B cell (primary cell): ENCODE measurements at regions of chr20 and their contacts with region 1.

Region 1: GRCh38 chr20:38221119-38221589 is 39.4 kb downstream of the KIAA1755 start:
- DNase-seq: peak; percentile 77
- ATAC-seq: peak; percentile 84
- H3K4me3 ChIP-seq: no peak overlapping the region
- H3K4me3 Mint-ChIP-seq: peak overlapping the region; percentile 55
- H3K27ac ChIP-seq: no peak overlapping the region
- H3K27ac Mint-ChIP-seq: peak overlapping the region; percentile 37
- H3K4me1 ChIP-seq: peaks cover 0 to 4% of the 10 kb centered on the region in 2 donors
- H3K4me1 Mint-ChIP-seq: peaks cover 5% of the 10 kb centered on the region
- H3K27me3 ChIP-seq: no peaks in the 10 kb centered on the region
- H3K27me3 Mint-ChIP-seq: peaks cover 5% of the 10 kb centered on the region
- CTCF ChIP-seq: peak; percentile 89

Region 2: DNA sequence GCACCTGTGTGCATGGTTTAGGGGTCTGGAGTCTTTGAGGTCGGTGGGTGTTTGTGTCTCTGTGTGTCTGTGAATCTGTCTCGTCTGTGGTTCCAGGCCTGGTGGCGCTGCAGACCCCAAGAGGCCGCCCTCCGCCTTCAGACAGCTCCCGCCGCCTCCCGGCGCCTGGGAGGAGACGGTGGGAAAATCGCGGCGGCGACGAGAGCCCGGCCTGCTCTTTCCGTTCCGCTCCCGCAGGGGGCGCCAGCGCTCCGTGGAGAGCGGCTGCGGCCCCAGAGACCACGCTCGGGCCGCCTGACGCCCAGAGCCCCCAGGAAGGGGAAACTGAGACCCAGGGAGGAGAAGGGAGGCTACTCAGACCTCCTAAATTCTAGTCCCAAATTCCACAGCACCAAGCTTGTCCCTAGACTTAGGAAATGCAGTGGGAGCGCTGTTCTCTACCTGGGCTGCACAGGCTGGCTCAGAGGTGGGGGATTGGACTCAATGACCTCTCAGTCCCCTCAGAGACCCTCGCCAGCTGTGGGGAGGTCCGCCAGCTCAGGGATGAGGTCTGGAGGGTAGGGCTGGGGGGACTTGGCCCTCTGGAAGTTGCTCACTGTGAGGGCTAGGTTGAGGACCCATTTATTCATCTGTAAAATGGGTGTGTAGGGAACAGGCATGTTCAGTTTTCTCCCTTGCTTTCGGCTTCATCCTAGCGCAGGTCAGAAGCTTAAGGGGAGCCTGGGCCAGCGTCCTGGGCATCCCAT is 656.6 kb before region 1 on chr20:
- CTCF ChIA-PET with region 1: interaction called, 24 read pairs
- POLR2A ChIA-PET with region 1: no interaction called
- intact Hi-C with region 1: no loop called
- DNase-seq: peak; percentile 67
- ATAC-seq: peak; percentile 49
- H3K4me3 ChIP-seq: no peak overlapping the region
- H3K4me3 Mint-ChIP-seq: no peak overlapping the region
- H3K27ac ChIP-seq: no peak overlapping the region
- H3K27ac Mint-ChIP-seq: no peak overlapping the region
- H3K4me1 ChIP-seq: peaks cover 3 to 5% of the 10 kb centered on the region in 2 donors
- H3K4me1 Mint-ChIP-seq: peaks cover 2% of the 10 kb centered on the region
- H3K27me3 ChIP-seq: peaks cover 0 to 31% (median 13%) of the 10 kb centered on the region in 4 experiments
- H3K27me3 Mint-ChIP-seq: peaks cover 43% of the 10 kb centered on the region
- CTCF ChIP-seq: peak; percentile 96

Region 3: DNA sequence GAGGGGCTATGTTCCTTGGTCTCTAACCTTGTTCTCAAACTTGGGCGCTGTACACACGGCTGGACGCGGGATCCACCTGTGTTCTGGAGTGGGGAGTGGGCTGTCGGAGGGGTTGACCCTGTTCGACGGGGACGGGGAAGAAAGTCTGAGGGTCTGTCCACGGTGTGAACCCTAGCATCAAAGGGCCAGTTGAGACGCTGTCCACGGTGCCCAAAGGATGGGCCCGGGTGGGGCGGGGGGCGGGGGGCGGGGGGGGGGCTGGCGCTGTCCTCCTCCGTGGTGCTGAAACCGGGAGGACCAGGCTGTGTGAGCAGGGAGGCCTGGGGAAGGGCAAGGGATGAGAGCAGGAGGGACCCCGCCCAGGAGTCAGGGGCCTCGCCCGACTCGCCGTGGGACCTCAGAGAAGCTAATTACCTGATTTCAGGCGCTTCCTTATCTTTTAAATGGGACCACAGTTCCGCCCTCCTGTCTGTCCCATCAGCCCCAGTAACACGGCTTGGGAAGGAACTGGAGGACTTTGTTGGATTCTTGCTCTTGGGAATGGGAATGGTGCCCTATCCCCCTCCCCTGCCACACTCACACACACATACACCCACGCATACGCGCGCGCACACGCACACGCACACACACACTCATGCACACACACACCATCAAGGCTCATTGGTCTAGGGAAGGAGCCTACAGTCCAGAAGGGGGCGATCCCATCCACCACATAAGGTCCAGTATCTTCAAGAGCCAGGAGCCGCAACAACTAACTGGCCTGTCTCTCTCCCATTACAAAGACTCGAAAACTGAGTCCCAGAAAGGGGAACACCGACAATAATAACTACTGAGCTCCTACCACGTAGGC is 319.3 kb before region 1 on chr20:
- CTCF ChIA-PET with region 1: interaction called, 4 read pairs
- POLR2A ChIA-PET with region 1: no interaction called
- intact Hi-C with region 1: loop called (anchors 2 kb)
- DNase-seq: peak; percentile 50
- ATAC-seq: peak; percentile 53
- H3K4me3 ChIP-seq: no peak overlapping the region
- H3K4me3 Mint-ChIP-seq: peak overlapping the region; percentile 77
- H3K27ac ChIP-seq: no peak overlapping the region
- H3K27ac Mint-ChIP-seq: peak overlapping the region; percentile 56
- H3K4me1 ChIP-seq: peaks cover 10 to 17% of the 10 kb centered on the region in 2 donors
- H3K4me1 Mint-ChIP-seq: peaks cover 14% of the 10 kb centered on the region
- H3K27me3 ChIP-seq: peaks cover 0 to 52% (median 22%) of the 10 kb centered on the region in 4 experiments
- H3K27me3 Mint-ChIP-seq: peaks cover 57% of the 10 kb centered on the region
- CTCF ChIP-seq: no peak

Region 4: GRCh38 chr20:38033310-38034107 is 187.6 kb before region 1 on chr20 and contains the starts of genes RPRD1B and TTI1:
- CTCF ChIA-PET with region 1: interaction called, 10 read pairs
- POLR2A ChIA-PET with region 1: no interaction called
- intact Hi-C with region 1: no loop called
- DNase-seq: peak; percentile 95
- ATAC-seq: peak; percentile 89
- H3K4me3 ChIP-seq: peak within 1 kb of the TSS; percentile 84 to 98 (median 87)
- H3K4me3 Mint-ChIP-seq: peak within 1 kb of the TSS; percentile 95
- H3K27ac ChIP-seq: peak within 1 kb of the TSS; percentile 87 to 90
- H3K27ac Mint-ChIP-seq: peak within 1 kb of the TSS; percentile 92
- H3K4me1 ChIP-seq: peaks cover 35 to 46% of the 10 kb centered on the region in 2 donors
- H3K4me1 Mint-ChIP-seq: peaks cover 74% of the 10 kb centered on the region
- H3K27me3 ChIP-seq: no peaks in the 10 kb centered on the region
- H3K27me3 Mint-ChIP-seq: no peaks in the 10 kb centered on the region
- CTCF ChIP-seq: no peak
- total RNA-seq, gene RPRD1B: 54.9 and 55.9 TPM in 2 replicates
- total RNA-seq, gene TTI1: 33.9 and 34.5 TPM in 2 replicates

Region 5: GRCh38 chr20:38073307-38074071 is 147.7 kb before region 1 on chr20:
- CTCF ChIA-PET with region 1: interaction called, 494 read pairs
- POLR2A ChIA-PET with region 1: no interaction called
- intact Hi-C with region 1: loop called (anchors 5 kb)
- DNase-seq: peak; percentile 75
- ATAC-seq: peak; percentile 53
- H3K4me3 ChIP-seq: no peak overlapping the region
- H3K4me3 Mint-ChIP-seq: no peak overlapping the region
- H3K27ac ChIP-seq: peak overlapping the region in 1 of 2 donors; percentile 5
- H3K27ac Mint-ChIP-seq: peak overlapping the region; percentile 68
- H3K4me1 ChIP-seq: peaks cover 27 to 41% of the 10 kb centered on the region in 2 donors
- H3K4me1 Mint-ChIP-seq: peaks cover 53% of the 10 kb centered on the region
- H3K27me3 ChIP-seq: no peaks in the 10 kb centered on the region
- H3K27me3 Mint-ChIP-seq: no peaks in the 10 kb centered on the region
- CTCF ChIP-seq: peak; percentile 81

Region 6: DNA sequence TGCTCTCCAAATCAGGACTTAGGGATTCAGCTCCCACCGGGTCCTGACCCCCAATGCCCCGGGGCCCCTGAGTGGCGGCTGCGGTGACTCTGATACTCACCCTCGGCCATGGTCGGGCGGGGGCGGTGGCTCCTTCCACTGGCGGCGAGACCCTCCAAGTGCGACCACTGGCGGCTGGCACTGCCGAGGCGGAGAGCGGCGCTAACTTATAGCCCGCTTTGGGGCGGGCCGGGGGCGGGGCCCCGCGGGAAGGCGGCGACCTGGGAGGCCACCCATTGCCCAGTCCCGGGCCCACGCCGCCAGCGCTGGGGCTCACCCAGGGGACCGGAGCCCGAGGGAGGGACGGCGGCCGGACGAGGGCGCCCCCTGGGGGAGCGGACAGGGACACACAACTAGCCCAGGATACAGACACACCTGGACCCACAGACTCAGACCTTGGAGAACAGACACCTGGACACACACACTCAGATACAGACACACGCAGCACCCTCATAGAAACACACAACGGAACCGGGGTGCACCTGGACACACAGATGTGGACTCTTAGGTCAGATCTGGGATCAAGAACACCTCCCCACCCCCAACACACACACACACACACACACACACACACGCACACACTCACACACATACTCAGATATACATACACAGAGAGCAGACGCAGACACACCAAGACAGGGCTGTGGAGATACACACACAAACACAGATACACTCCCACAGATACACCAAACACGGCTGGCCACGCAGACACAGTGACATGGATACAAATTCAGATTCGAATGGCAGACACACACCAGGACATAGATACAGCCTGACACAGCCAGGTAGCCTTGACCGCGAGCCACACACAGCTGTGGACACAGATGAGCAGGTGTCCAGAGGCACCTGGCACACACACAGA is 55.8 kb before region 1 on chr20 and contains the start of gene TGM2:
- CTCF ChIA-PET with region 1: interaction called, 74 read pairs
- POLR2A ChIA-PET with region 1: no interaction called
- intact Hi-C with region 1: loop called (anchors 1 kb)
- DNase-seq: peak; percentile 82
- ATAC-seq: peak; percentile 95
- H3K4me3 ChIP-seq: peak within 1 kb of the TSS in 4 of 5 experiments; percentile 18 to 44 (median 32)
- H3K4me3 Mint-ChIP-seq: peak within 1 kb of the TSS; percentile 64
- H3K27ac ChIP-seq: no peak within 1 kb of the TSS
- H3K27ac Mint-ChIP-seq: peak within 1 kb of the TSS; percentile 82
- H3K4me1 ChIP-seq: peaks cover 18 to 28% of the 10 kb centered on the region in 2 donors
- H3K4me1 Mint-ChIP-seq: peaks cover 29% of the 10 kb centered on the region
- H3K27me3 ChIP-seq: peaks cover 0 to 7% (median 0%) of the 10 kb centered on the region in 4 experiments
- H3K27me3 Mint-ChIP-seq: no peaks in the 10 kb centered on the region
- CTCF ChIP-seq: peak; percentile 83
- total RNA-seq, gene TGM2: 58.8 and 60.8 TPM in 2 replicates

Region 7: GRCh38 chr20:38210741-38211140 is 10.4 kb before region 1 on chr20:
- CTCF ChIA-PET with region 1: interaction called, 66 read pairs
- POLR2A ChIA-PET with region 1: no interaction called
- intact Hi-C with region 1: no loop called
- DNase-seq: no peak
- ATAC-seq: no peak
- H3K4me3 ChIP-seq: no peak overlapping the region
- H3K4me3 Mint-ChIP-seq: no peak overlapping the region
- H3K27ac ChIP-seq: no peak overlapping the region
- H3K27ac Mint-ChIP-seq: no peak overlapping the region
- H3K4me1 ChIP-seq: no peaks in the 10 kb centered on the region
- H3K4me1 Mint-ChIP-seq: no peaks in the 10 kb centered on the region
- H3K27me3 ChIP-seq: peaks cover 0 to 17% (median 0%) of the 10 kb centered on the region in 4 experiments
- H3K27me3 Mint-ChIP-seq: peaks cover 10% of the 10 kb centered on the region
- CTCF ChIP-seq: no peak

Region 8: DNA sequence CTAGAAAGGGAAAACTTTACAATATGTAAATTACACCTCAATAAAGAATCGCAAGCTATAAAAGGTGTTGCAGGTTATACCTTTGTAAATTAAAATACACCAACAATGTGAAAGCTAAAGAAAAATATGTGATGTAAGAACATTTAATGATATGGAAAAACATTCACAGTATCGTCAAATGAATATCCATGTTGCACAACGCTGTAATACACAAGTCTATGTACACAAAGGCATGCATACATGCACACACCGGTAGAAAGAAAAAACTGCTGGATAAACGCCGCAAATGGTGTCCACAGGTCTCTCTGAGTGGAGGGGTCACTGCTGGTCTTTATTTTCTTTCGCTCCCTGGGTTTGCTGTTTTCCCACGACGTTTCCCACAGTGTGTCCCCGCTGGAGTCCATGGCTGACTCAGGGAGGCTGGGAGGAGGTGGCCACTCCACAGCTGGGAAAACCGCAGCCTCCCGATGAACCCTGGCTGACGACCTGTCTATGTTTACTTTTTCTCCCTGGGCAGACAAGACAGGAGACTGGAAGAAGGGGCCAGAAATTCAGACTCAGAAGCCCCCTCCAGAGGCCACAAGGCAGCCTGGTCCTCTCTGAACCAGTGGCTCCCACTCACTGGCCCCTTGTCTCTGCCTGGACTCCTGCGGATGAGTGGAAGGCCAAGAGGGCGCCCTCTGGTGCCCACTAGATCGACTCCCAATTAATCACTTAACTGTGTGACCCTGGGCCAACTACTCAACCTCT is 69.9 kb after region 1 on chr20:
- CTCF ChIA-PET with region 1: no interaction called
- POLR2A ChIA-PET with region 1: no interaction called
- intact Hi-C with region 1: no loop called
- DNase-seq: no peak
- ATAC-seq: no peak
- H3K4me3 ChIP-seq: no peak overlapping the region
- H3K4me3 Mint-ChIP-seq: no peak overlapping the region
- H3K27ac ChIP-seq: no peak overlapping the region
- H3K27ac Mint-ChIP-seq: no peak overlapping the region
- H3K4me1 ChIP-seq: no peaks in the 10 kb centered on the region
- H3K4me1 Mint-ChIP-seq: no peaks in the 10 kb centered on the region
- H3K27me3 ChIP-seq: peaks cover 0 to 16% (median 4%) of the 10 kb centered on the region in 4 experiments
- H3K27me3 Mint-ChIP-seq: peaks cover 55% of the 10 kb centered on the region
- CTCF ChIP-seq: no peak